ENCODE measurements at regions of chr1 and their contacts with region 1.

Region 1: GRCh38 chr1:98323906-98324358 is 337.6 kb upstream of the SNX7 start:
- DNase-seq: peak; percentile 86
- H3K4me3 ChIP-seq: peak overlapping the region in 1 of 3 experiments; percentile 26
- H3K27ac ChIP-seq: peak overlapping the region; percentile 97
- H3K4me1 ChIP-seq: peaks cover 72% of the 10 kb centered on the region
- H3K27me3 ChIP-seq: no peaks in the 10 kb centered on the region
- CTCF ChIP-seq: no peak
- POLR2A ChIP-seq: peak; percentile 80

Region 2: GRCh38 chr1:97901017-97901658 is 422.8 kb before region 1 on chr1:
- CTCF ChIA-PET with region 1: no interaction called
- POLR2A ChIA-PET with region 1: no interaction called
- dilution Hi-C with region 1: no loop called
- intact Hi-C with region 1: loop called (anchors 5 kb)
- DNase-seq: peak; percentile 86
- H3K4me3 ChIP-seq: peak overlapping the region; percentile 21 to 88 (median 74)
- H3K27ac ChIP-seq: peak overlapping the region; percentile 92
- H3K4me1 ChIP-seq: peaks cover 44% of the 10 kb centered on the region
- H3K27me3 ChIP-seq: no peaks in the 10 kb centered on the region
- CTCF ChIP-seq: no peak
- POLR2A ChIP-seq: no peak

Region 3: GRCh38 chr1:98210064-98210463 is 113.9 kb before region 1 on chr1:
- CTCF ChIA-PET with region 1: interaction called, 4 read pairs
- POLR2A ChIA-PET with region 1: interaction called, 3 read pairs
- dilution Hi-C with region 1: no loop called
- intact Hi-C with region 1: loop called (anchors 1 kb)
- DNase-seq: peak; percentile 89
- H3K4me3 ChIP-seq: peak overlapping the region; percentile 31 to 94 (median 89)
- H3K27ac ChIP-seq: peak overlapping the region; percentile 91
- H3K4me1 ChIP-seq: peaks cover 23% of the 10 kb centered on the region
- H3K27me3 ChIP-seq: no peaks in the 10 kb centered on the region
- CTCF ChIP-seq: no peak
- POLR2A ChIP-seq: peak; percentile 69

Region 4: GRCh38 chr1:98336472-98337083 is 12.6 kb after region 1 on chr1:
- CTCF ChIA-PET with region 1: interaction called, 7 read pairs
- POLR2A ChIA-PET with region 1: interaction called, 3 read pairs
- dilution Hi-C with region 1: no loop called
- intact Hi-C with region 1: loop called (anchors 1 kb)
- DNase-seq: peak; percentile 80
- H3K4me3 ChIP-seq: peak overlapping the region in 2 of 3 experiments; percentile 27 to 32
- H3K27ac ChIP-seq: peak overlapping the region; percentile 66
- H3K4me1 ChIP-seq: peaks cover 14% of the 10 kb centered on the region
- H3K27me3 ChIP-seq: no peaks in the 10 kb centered on the region
- CTCF ChIP-seq: no peak
- POLR2A ChIP-seq: no peak

Region 5: DNA sequence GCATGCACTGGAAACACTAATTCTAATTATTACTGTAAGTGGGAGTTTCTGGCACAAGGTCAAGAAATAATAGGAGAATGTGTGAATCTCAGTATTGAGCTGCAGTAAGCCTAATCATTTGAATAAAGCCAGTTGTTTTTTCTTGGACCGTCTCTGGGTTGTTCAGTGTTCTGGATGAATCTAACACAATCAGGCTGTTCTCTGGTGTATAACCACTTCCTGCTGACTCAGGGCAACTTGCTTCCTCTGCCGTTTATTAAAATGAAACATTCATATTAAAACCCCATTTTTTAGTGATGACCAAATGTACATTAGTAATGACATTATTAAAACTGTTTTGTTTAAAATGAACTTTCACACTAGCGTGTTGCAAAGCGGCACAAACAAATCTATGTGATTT is 64.5 kb after region 1 on chr1:
- CTCF ChIA-PET with region 1: no interaction called
- POLR2A ChIA-PET with region 1: no interaction called
- dilution Hi-C with region 1: no loop called
- intact Hi-C with region 1: loop called (anchors 1 kb)
- DNase-seq: peak; percentile 91
- H3K4me3 ChIP-seq: peak overlapping the region in 1 of 3 experiments; percentile 27
- H3K27ac ChIP-seq: peak overlapping the region; percentile 80
- H3K4me1 ChIP-seq: peaks cover 57% of the 10 kb centered on the region
- H3K27me3 ChIP-seq: no peaks in the 10 kb centered on the region
- CTCF ChIP-seq: no peak
- POLR2A ChIP-seq: peak; percentile 18

Region 6: DNA sequence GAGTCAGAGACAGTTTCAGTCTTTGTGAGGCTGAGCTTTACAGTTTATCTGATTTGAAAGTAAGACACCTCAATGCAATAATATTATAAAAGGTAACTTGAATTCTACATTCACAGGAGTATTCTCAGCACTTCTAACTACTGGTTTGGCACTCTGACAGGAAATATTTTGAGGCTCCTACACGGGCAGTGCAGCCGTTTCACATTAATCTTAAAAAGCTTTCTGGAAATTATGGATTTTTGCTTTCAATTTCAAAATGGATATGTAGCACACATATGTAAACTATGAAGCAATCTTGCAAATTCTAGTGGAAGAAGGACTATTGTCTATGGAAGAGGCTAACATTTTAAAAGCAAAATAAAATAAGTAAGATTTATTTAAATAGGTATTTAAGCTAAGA is 74.7 kb after region 1 on chr1:
- CTCF ChIA-PET with region 1: no interaction called
- POLR2A ChIA-PET with region 1: no interaction called
- dilution Hi-C with region 1: no loop called
- intact Hi-C with region 1: no loop called
- DNase-seq: no peak
- H3K4me3 ChIP-seq: no peak overlapping the region
- H3K27ac ChIP-seq: no peak overlapping the region
- H3K4me1 ChIP-seq: no peaks in the 10 kb centered on the region
- H3K27me3 ChIP-seq: no peaks in the 10 kb centered on the region
- CTCF ChIP-seq: no peak
- POLR2A ChIP-seq: no peak

Measured in endothelial cell of umbilical vein (primary cell).